B cell (primary cell): ENCODE measurements at regions of chr1 and their contacts with region 1.

Region 1: DNA sequence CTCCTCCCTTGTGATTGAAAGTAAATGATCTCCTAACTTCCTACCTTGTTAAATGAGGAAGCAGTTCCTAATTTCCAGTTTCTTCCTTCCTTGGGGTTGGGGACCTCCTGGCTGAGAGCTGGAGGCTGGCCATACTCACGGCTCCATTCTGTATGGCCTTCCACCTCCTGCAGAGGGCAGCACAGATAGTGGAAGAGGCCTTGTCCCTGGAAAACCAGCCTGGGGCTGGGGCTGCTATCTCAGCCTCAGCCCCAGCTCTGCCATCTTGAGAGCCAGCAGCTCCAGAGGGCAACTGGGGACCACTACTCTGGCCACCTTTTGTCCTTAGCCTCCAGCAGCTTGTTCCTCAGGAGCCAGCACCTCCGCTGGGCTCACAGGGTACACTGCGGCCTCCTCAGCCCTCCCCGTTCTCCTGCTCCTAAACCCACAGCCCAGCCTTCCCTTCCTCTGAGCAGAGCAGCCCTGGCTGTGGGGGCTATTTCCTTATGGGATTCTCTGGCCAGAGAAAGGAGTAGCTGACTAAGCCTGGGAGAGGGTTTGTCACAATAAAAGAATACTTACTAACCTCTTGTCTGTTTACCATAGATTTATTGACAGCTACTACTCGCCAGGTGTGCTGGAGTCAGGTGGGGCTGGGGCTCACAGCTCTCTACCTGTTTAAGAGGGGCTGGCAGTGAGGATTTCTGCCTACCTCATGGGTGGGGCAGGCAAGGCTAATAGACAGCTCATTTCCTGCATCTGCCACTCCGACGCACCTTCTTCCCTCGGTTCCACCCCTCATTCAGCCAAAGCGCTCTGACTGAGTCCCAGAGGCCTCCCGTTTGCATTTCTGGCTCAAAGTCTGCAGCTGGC is 6.3 kb downstream of the TMEM234 start:
- DNase-seq: peak; percentile 70
- ATAC-seq: peak; percentile 81
- H3K4me3 ChIP-seq: no peak overlapping the region
- H3K4me3 Mint-ChIP-seq: no peak overlapping the region
- H3K27ac ChIP-seq: no peak overlapping the region
- H3K27ac Mint-ChIP-seq: no peak overlapping the region
- H3K4me1 ChIP-seq: peaks cover 6 to 12% of the 10 kb centered on the region in 2 donors
- H3K4me1 Mint-ChIP-seq: peaks cover 13% of the 10 kb centered on the region
- H3K27me3 ChIP-seq: no peaks in the 10 kb centered on the region
- H3K27me3 Mint-ChIP-seq: no peaks in the 10 kb centered on the region
- CTCF ChIP-seq: peak; percentile 78

Region 2: GRCh38 chr1:32091176-32091575 is 124.7 kb before region 1 on chr1:
- CTCF ChIA-PET with region 1: no interaction called
- POLR2A ChIA-PET with region 1: no interaction called
- intact Hi-C with region 1: no loop called
- DNase-seq: no peak
- ATAC-seq: no peak
- H3K4me3 ChIP-seq: no peak overlapping the region
- H3K4me3 Mint-ChIP-seq: no peak overlapping the region
- H3K27ac ChIP-seq: no peak overlapping the region
- H3K27ac Mint-ChIP-seq: no peak overlapping the region
- H3K4me1 ChIP-seq: no peaks in the 10 kb centered on the region
- H3K4me1 Mint-ChIP-seq: no peaks in the 10 kb centered on the region
- H3K27me3 ChIP-seq: no peaks in the 10 kb centered on the region
- H3K27me3 Mint-ChIP-seq: no peaks in the 10 kb centered on the region
- CTCF ChIP-seq: no peak

Region 3: DNA sequence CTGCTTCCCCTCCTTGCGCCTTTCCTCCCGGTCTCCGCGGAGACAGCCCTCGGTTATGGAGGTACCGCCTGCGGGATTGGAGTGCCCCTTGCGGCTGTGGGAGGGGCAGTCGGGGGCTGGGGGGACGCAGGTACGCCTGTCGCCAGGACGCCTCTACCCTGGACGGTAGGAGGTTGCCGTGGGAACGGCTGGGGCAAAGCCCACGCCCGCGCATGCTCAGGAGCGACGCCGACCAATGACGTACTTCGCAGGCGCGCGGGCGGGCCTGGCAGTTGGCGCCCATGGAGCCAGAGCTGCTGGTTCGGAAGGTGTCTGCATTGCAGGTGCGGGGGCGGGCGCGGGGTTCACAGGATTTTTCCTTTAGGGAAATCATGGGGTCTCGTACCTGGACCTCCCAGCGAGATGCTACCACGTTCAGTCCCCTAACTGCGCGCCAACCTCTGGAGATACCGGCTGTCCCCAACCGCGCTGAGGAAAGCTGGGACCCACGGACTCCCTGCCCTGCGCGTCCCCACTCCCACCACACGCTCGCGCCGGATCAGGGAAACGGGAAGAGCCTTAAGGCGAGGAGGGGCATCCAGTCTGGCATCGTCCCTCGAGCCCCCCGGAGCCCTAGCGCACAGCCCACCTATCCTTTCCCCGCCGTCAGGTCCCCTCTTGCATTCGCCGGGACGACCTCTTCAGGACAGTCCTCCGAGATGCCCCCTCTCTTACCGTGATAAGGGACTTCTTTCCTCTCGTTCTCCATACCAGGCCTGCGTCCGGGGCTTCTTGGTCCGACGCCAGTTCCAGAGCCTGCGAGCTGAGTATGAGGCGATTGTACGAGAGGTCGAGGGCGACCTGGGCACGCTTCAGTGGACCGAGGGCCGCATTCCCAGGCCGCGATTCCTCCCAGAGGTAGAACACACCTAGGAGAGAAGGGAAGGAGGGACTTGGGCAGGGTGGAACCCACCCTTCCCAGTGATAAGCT is 10.2 kb before region 1 on chr1 and contains the start of gene IQCC:
- CTCF ChIA-PET with region 1: interaction called, 20 read pairs
- POLR2A ChIA-PET with region 1: interaction called, 3 read pairs
- intact Hi-C with region 1: no loop called
- DNase-seq: peak; percentile 90
- ATAC-seq: peak; percentile 62
- H3K4me3 ChIP-seq: peak within 1 kb of the TSS in 4 of 5 experiments; percentile 59 to 78 (median 62)
- H3K4me3 Mint-ChIP-seq: peak within 1 kb of the TSS; percentile 88
- H3K27ac ChIP-seq: peak within 1 kb of the TSS in 1 of 2 donors; percentile 46
- H3K27ac Mint-ChIP-seq: peak within 1 kb of the TSS; percentile 68
- H3K4me1 ChIP-seq: peaks cover 42 to 58% of the 10 kb centered on the region in 2 donors
- H3K4me1 Mint-ChIP-seq: peaks cover 60% of the 10 kb centered on the region
- H3K27me3 ChIP-seq: no peaks in the 10 kb centered on the region
- H3K27me3 Mint-ChIP-seq: no peaks in the 10 kb centered on the region
- CTCF ChIP-seq: no peak
- total RNA-seq, gene IQCC: 2.0 and 2.1 TPM in 2 replicates

Region 4: GRCh38 chr1:32240140-32240951 is 24.5 kb after region 1 on chr1:
- CTCF ChIA-PET with region 1: interaction called, 49 read pairs
- POLR2A ChIA-PET with region 1: no interaction called
- intact Hi-C with region 1: no loop called
- DNase-seq: peak; percentile 75
- ATAC-seq: peak; percentile 79
- H3K4me3 ChIP-seq: peak overlapping the region; percentile 50 to 77 (median 69)
- H3K4me3 Mint-ChIP-seq: peak overlapping the region; percentile 95
- H3K27ac ChIP-seq: peak overlapping the region; percentile 4 to 61
- H3K27ac Mint-ChIP-seq: peak overlapping the region; percentile 93
- H3K4me1 ChIP-seq: peaks cover 16 to 31% of the 10 kb centered on the region in 2 donors
- H3K4me1 Mint-ChIP-seq: peaks cover 20% of the 10 kb centered on the region
- H3K27me3 ChIP-seq: no peaks in the 10 kb centered on the region
- H3K27me3 Mint-ChIP-seq: no peaks in the 10 kb centered on the region
- CTCF ChIP-seq: peak; percentile 30

Region 5: DNA sequence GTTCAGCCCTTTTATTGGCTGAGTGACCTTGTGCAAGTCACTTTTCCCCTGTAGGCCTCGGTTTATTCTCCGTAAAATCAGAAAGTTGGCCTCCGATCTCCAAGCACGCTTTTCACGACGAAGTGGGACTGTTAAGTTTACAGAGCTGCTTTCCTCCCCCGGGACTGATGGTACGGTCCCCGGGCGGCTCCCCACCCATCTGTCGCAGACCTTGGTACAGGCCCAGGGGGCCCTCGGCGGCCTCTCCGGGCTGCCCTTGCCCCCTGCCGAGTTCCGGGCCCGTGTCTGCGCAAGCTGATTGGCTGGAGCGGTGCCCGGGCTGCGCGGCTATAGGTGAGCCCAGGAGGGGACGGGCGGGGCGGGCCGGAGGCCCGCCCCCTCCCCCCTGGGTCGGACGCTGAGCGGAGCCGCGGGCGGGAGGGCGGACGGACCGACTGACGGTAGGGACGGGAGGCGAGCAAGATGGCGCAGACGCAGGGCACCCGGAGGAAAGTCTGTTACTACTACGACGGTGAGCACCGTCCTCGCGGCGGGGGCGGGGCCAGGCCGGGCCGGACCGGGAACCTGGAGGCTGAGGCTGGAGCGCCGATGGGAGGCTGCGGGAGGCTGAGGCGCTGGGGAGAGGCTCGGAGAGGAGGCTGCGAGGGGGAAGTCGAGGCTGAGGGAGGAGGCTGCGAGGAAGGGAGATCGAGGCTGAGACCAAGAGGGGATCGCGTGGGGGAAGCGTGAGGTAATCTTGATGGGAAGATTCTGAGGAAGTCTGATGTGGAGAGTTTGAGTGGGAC is 76.0 kb after region 1 on chr1 and contains the start of gene HDAC1:
- CTCF ChIA-PET with region 1: interaction called, 29 read pairs
- POLR2A ChIA-PET with region 1: interaction called, 6 read pairs
- intact Hi-C with region 1: no loop called
- DNase-seq: peak; percentile 96
- ATAC-seq: peak; percentile 98
- H3K4me3 ChIP-seq: peak within 1 kb of the TSS; percentile 77 to 98 (median 88)
- H3K4me3 Mint-ChIP-seq: peak within 1 kb of the TSS; percentile 100
- H3K27ac ChIP-seq: peak within 1 kb of the TSS; percentile 81 to 87
- H3K27ac Mint-ChIP-seq: peak within 1 kb of the TSS; percentile 99
- H3K4me1 ChIP-seq: peaks cover 41 to 42% of the 10 kb centered on the region in 2 donors
- H3K4me1 Mint-ChIP-seq: peaks cover 39% of the 10 kb centered on the region
- H3K27me3 ChIP-seq: no peaks in the 10 kb centered on the region
- H3K27me3 Mint-ChIP-seq: no peaks in the 10 kb centered on the region
- CTCF ChIP-seq: peak; percentile 1
- total RNA-seq, gene HDAC1: 200 and 205 TPM in 2 replicates

Region 6: GRCh38 chr1:32335790-32336590 is 120.1 kb after region 1 on chr1 and contains the start of gene MARCKSL1:
- CTCF ChIA-PET with region 1: interaction called, 33 read pairs
- POLR2A ChIA-PET with region 1: interaction called, 3 read pairs
- intact Hi-C with region 1: loop called (anchors 2 kb)
- DNase-seq: peak; percentile 94
- ATAC-seq: peak; percentile 61
- H3K4me3 ChIP-seq: peak within 1 kb of the TSS; percentile 5 to 78 (median 70)
- H3K4me3 Mint-ChIP-seq: peak within 1 kb of the TSS; percentile 93
- H3K27ac ChIP-seq: peak within 1 kb of the TSS; percentile 49 to 61
- H3K27ac Mint-ChIP-seq: peak within 1 kb of the TSS; percentile 92
- H3K4me1 ChIP-seq: peaks cover 57 to 61% of the 10 kb centered on the region in 2 donors
- H3K4me1 Mint-ChIP-seq: peaks cover 60% of the 10 kb centered on the region
- H3K27me3 ChIP-seq: no peaks in the 10 kb centered on the region
- H3K27me3 Mint-ChIP-seq: no peaks in the 10 kb centered on the region
- CTCF ChIP-seq: no peak
- total RNA-seq, gene MARCKSL1: 73.2 and 77.6 TPM in 2 replicates

Region 7: GRCh38 chr1:32377541-32378220 is 161.8 kb after region 1 on chr1:
- CTCF ChIA-PET with region 1: interaction called, 13 read pairs
- POLR2A ChIA-PET with region 1: no interaction called
- intact Hi-C with region 1: no loop called
- DNase-seq: peak; percentile 11
- ATAC-seq: no peak
- H3K4me3 ChIP-seq: no peak overlapping the region
- H3K4me3 Mint-ChIP-seq: no peak overlapping the region
- H3K27ac ChIP-seq: no peak overlapping the region
- H3K27ac Mint-ChIP-seq: no peak overlapping the region
- H3K4me1 ChIP-seq: peaks cover under 1 to 2% of the 10 kb centered on the region in 2 donors
- H3K4me1 Mint-ChIP-seq: peaks cover 5% of the 10 kb centered on the region
- H3K27me3 ChIP-seq: no peaks in the 10 kb centered on the region
- H3K27me3 Mint-ChIP-seq: no peaks in the 10 kb centered on the region
- CTCF ChIP-seq: no peak

Region 8: DNA sequence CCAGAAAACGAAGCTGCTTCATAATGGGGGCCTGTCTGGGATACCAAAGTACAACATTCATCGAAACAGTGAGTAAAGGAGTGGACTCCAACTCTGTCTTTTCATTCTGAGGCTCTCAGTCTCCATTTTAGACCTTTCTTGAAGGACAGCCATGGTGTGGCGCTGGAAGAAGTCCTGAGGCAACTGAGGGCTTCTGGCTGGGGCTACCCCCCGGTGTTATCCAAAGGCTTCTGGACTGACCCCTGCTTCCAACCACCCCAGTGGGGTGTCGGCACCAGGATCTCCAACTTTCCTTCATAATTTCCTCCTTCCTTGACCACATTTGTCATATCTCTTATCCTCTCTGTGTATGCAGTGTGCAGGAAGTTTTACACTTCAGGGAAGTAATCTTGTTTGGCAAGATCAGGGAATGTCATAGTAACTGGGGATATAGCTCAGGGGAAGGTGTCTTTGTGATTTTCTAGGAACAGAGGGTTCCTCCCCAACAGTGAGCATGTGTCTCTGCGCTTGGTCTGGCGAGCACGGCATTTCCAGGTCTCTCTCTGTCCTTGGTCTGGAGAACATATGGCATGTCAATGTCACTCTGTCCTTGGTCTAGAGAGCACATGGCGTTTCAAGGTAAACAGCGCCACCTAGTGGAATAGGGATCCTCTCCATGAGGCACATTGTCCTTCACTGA is 197.8 kb after region 1 on chr1:
- CTCF ChIA-PET with region 1: interaction called, 36 read pairs
- POLR2A ChIA-PET with region 1: no interaction called
- intact Hi-C with region 1: loop called (anchors 1 kb)
- DNase-seq: peak; percentile 86
- ATAC-seq: peak; percentile 57
- H3K4me3 ChIP-seq: no peak overlapping the region
- H3K4me3 Mint-ChIP-seq: no peak overlapping the region
- H3K27ac ChIP-seq: no peak overlapping the region
- H3K27ac Mint-ChIP-seq: no peak overlapping the region
- H3K4me1 ChIP-seq: no peaks in the 10 kb centered on the region
- H3K4me1 Mint-ChIP-seq: peaks cover 2% of the 10 kb centered on the region
- H3K27me3 ChIP-seq: peaks cover 0 to 6% (median 5%) of the 10 kb centered on the region in 4 experiments
- H3K27me3 Mint-ChIP-seq: peaks cover 19% of the 10 kb centered on the region
- CTCF ChIP-seq: peak; percentile 94